ENCODE measurements at regions of chr3 and their contacts with region 1.

Region 1: DNA sequence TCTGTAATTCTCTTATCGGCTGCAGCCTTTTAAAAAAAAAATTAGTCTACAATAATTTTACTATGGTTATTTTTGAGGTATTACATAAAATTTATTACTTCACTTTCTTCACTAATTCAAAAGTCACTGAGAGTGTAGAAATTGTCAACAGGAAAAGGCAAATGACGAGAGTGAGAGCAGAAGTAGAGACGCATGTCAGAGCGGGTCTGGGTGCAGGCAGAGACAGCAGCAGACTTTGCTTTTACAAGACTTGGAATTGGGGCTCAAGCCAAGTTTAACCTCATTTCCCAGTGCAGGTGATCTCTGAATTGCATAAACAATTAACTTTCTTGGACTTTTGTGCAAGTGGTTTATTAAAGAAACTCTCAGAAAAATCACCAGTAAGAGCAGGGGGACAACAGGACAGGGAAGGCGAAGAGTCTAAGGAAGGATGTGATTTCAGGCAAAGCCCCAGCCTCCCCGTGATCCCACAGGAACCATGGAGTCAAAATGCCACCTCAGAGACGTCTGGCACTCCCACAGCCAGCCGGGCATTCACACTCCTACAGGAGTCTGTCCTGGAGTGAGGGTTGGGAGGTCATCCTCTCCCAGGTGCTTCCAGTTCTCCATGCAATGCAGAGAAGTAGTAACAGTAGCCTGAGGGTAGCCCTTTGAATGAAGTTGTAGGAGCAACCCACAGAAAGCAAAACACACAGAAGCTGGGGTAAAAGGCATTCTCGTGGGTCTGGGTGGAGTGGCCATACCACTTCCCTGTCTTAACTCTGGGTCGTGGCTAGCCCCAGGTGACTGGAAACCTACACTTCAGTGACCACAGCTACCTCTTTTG is 274.0 kb upstream of the TGFBR2 start:
- DNase-seq: peak in 4 of 9 experiments; percentile 27 to 69 (median 48)
- ATAC-seq: peak; percentile 91
- H3K4me3 ChIP-seq: peak overlapping the region in 1 of 2 experiments; percentile 31
- H3K4me3 Mint-ChIP-seq: peak overlapping the region; percentile 76
- H3K27ac ChIP-seq: peak overlapping the region in 1 of 2 experiments; percentile 50
- H3K27ac Mint-ChIP-seq: peak overlapping the region; percentile 99
- H3K4me1 ChIP-seq: peaks cover 31% of the 10 kb centered on the region
- H3K4me1 Mint-ChIP-seq: peaks cover 36% of the 10 kb centered on the region
- H3K27me3 ChIP-seq: no peaks in the 10 kb centered on the region
- H3K27me3 Mint-ChIP-seq: no peaks in the 10 kb centered on the region
- CTCF ChIP-seq: no peak

Region 2: GRCh38 chr3:30258426-30259392 is 73.7 kb before region 1 on chr3:
- CTCF ChIA-PET with region 1: no interaction called
- POLR2A ChIA-PET with region 1: no interaction called
- intact Hi-C with region 1: no loop called
- DNase-seq: no peak
- ATAC-seq: no peak
- H3K4me3 ChIP-seq: no peak overlapping the region
- H3K4me3 Mint-ChIP-seq: no peak overlapping the region
- H3K27ac ChIP-seq: no peak overlapping the region
- H3K27ac Mint-ChIP-seq: no peak overlapping the region
- H3K4me1 ChIP-seq: peaks cover 9% of the 10 kb centered on the region
- H3K4me1 Mint-ChIP-seq: peaks cover 19% of the 10 kb centered on the region
- H3K27me3 ChIP-seq: no peaks in the 10 kb centered on the region
- H3K27me3 Mint-ChIP-seq: no peaks in the 10 kb centered on the region
- CTCF ChIP-seq: no peak

Region 3: GRCh38 chr3:30353711-30354467 is 21.5 kb after region 1 on chr3:
- CTCF ChIA-PET with region 1: no interaction called
- POLR2A ChIA-PET with region 1: interaction called, 3 read pairs
- intact Hi-C with region 1: loop called in 1 of 2 experiments (anchors 2 kb)
- DNase-seq: peak; percentile 3 to 91 (median 53)
- ATAC-seq: peak; percentile 98
- H3K4me3 ChIP-seq: peak overlapping the region in 1 of 2 experiments; percentile 2
- H3K4me3 Mint-ChIP-seq: peak overlapping the region; percentile 64
- H3K27ac ChIP-seq: peak overlapping the region in 1 of 2 experiments; percentile 25
- H3K27ac Mint-ChIP-seq: peak overlapping the region; percentile 94
- H3K4me1 ChIP-seq: peaks cover 82% of the 10 kb centered on the region
- H3K4me1 Mint-ChIP-seq: peaks cover 85% of the 10 kb centered on the region
- H3K27me3 ChIP-seq: no peaks in the 10 kb centered on the region
- H3K27me3 Mint-ChIP-seq: no peaks in the 10 kb centered on the region
- CTCF ChIP-seq: no peak

Region 4: DNA sequence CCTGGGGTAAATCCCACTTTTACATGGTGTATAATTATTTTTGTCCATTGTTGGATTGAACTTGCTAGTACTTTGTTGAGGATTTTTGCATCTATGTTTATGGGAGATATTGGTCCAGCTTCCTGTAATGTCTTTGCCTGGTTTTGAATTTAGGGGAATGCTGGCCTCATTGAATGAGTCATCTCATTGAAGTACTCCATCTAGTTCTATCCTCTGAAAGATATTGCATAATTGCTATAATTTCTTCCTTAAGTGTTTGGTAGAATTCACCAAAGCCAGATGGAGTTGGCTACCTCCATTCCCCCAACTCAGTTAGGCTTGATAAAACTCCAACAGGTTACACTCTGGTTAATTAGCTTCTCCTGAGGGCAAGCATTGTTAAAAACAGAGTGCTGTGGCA is 36.6 kb after region 1 on chr3:
- CTCF ChIA-PET with region 1: no interaction called
- POLR2A ChIA-PET with region 1: no interaction called
- intact Hi-C with region 1: loop called in 1 of 2 experiments (anchors 5 kb)
- DNase-seq: no peak
- ATAC-seq: no peak
- H3K4me3 ChIP-seq: no peak overlapping the region
- H3K4me3 Mint-ChIP-seq: no peak overlapping the region
- H3K27ac ChIP-seq: no peak overlapping the region
- H3K27ac Mint-ChIP-seq: no peak overlapping the region
- H3K4me1 ChIP-seq: no peaks in the 10 kb centered on the region
- H3K4me1 Mint-ChIP-seq: peaks cover 9% of the 10 kb centered on the region
- H3K27me3 ChIP-seq: no peaks in the 10 kb centered on the region
- H3K27me3 Mint-ChIP-seq: no peaks in the 10 kb centered on the region
- CTCF ChIP-seq: no peak

Region 5: DNA sequence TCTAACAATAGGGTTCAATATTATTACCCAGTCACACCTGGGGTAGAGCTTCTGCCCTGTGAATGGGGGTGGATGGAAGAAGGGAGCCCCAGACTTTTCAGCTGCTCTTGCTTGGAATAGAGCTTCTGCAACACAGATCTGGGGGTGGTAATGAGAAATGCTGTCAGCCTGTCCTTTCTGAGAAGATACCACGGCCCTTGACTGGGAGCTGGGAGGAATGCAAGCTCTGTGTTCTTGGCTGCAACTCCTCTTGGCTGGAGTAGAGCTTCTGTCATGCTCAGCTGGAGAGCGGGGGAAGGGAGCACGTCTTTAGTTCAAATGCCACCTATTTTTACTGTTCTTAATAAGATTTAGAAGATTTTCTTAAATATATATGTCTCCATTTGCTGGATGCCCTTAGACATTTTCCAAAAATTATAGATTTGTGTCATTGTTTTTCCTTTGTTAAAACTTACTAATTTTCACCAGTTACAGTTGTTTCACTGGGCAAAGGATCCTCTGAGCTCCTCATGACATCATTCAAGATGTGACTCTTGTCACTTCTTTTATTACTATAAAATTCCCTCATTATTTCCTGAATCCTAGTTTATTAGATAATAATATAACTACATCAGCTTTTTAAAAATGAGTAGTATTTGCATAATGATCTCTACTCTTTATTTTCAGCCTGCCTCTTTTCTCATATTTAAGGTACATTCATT is 94.0 kb after region 1 on chr3:
- CTCF ChIA-PET with region 1: no interaction called
- POLR2A ChIA-PET with region 1: no interaction called
- intact Hi-C with region 1: no loop called
- DNase-seq: no peak
- ATAC-seq: no peak
- H3K4me3 ChIP-seq: no peak overlapping the region
- H3K4me3 Mint-ChIP-seq: no peak overlapping the region
- H3K27ac ChIP-seq: no peak overlapping the region
- H3K27ac Mint-ChIP-seq: no peak overlapping the region
- H3K4me1 ChIP-seq: no peaks in the 10 kb centered on the region
- H3K4me1 Mint-ChIP-seq: no peaks in the 10 kb centered on the region
- H3K27me3 ChIP-seq: no peaks in the 10 kb centered on the region
- H3K27me3 Mint-ChIP-seq: no peaks in the 10 kb centered on the region
- CTCF ChIP-seq: no peak